ENCODE measurements at regions of chr13 and their contacts with region 1.

Region 1: GRCh38 chr13:28679628-28680027 is 20.7 kb downstream of the POMP start:
- DNase-seq: no peak
- H3K4me3 ChIP-seq: no peak overlapping the region
- H3K27ac ChIP-seq: no peak overlapping the region
- H3K4me1 ChIP-seq: no peaks in the 10 kb centered on the region
- H3K27me3 ChIP-seq: no peaks in the 10 kb centered on the region
- CTCF ChIP-seq: peak; percentile 38 to 42

Region 2: DNA sequence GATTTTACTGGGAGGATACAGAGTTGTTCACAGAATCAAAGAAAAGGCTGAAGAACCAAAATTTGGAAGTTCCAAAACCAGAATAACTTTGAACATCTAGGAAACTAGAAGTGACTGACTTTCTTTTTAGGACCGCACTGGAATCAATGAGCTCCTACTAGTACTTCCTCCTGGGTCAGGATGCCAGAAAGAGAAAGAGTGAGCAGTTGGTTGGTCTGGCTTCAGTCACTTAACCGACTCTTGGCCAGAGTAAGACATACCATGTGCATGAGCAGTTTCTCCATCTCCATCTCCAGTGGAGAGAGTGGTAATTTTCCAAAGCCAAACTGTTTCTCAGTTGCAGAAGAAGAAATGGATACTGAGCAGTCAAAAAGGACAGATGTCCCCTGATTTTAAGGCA is 113.4 kb after region 1 on chr13:
- CTCF ChIA-PET with region 1: interaction called, 4 read pairs
- dilution Hi-C with region 1: loop called (anchors 25 kb)
- in situ Hi-C with region 1: loop called (anchors 10 kb)
- intact Hi-C with region 1: loop called (anchors 1 kb)
- DNase-seq: peak; percentile 6
- H3K4me3 ChIP-seq: no peak overlapping the region
- H3K27ac ChIP-seq: no peak overlapping the region
- H3K4me1 ChIP-seq: no peaks in the 10 kb centered on the region
- H3K27me3 ChIP-seq: no peaks in the 10 kb centered on the region
- CTCF ChIP-seq: no peak